Naive thymus-derived CD8-positive, alpha-beta T cell (primary cell): ENCODE measurements at regions of chr5 and their contacts with region 1.

Region 1: GRCh38 chr5:157858527-157859226 is at the start of gene CLINT1:
- DNase-seq: peak; percentile 80 to 92 (median 83)
- ATAC-seq: peak; percentile 95 to 96
- H3K4me3 Mint-ChIP-seq: peak within 1 kb of the TSS; percentile 90 to 99 (median 97)
- H3K27ac Mint-ChIP-seq: peak within 1 kb of the TSS; percentile 92 to 98 (median 96)
- H3K4me1 Mint-ChIP-seq: peaks cover 36 to 76% (median 72%) of the 10 kb centered on the region in 4 donors
- H3K27me3 Mint-ChIP-seq: no peaks in the 10 kb centered on the region
- polyA plus RNA-seq, gene CLINT1: 64.7 to 75.5 (median 65.0) TPM

Region 2: DNA sequence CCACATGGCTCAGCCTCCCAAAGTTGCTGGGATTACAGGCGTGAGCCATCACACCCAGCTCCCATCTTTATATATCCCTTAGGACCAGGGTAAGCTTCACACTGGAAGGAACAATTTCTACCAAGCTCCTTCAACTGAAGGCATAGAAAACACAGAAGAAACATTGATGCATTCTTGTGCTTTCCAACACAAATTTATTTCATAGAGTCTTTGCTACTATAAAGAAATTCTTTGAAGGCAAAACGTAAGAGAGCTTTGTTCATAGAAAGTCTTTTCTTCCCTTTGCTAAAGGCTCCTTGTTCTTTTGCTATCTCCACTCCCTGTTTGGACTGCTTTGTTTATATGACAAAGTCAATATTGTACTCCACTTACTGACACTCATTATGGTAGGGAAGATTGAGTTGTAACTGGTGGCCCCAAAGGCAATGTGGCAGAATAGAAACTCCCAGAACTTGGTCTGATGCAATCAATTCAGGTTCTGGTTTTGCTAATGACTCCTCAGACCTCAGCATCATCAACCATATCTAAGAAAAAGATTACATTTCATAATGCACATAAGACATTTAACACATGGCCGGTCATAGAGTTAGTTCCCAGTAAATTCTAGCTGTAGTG is 97.7 kb after region 1 on chr5:
- POLR2A ChIA-PET with region 1: interaction called, 10 read pairs
- DNase-seq: no peak
- ATAC-seq: no peak
- H3K4me3 Mint-ChIP-seq: no peak overlapping the region
- H3K27ac Mint-ChIP-seq: no peak overlapping the region
- H3K4me1 Mint-ChIP-seq: no peaks in the 10 kb centered on the region
- H3K27me3 Mint-ChIP-seq: peaks cover 3 to 19% (median 10%) of the 10 kb centered on the region in 5 donors

Region 3: GRCh38 chr5:158126442-158127405 is 268.0 kb after region 1 on chr5:
- POLR2A ChIA-PET with region 1: no interaction called
- DNase-seq: no peak
- ATAC-seq: no peak
- H3K4me3 Mint-ChIP-seq: no peak overlapping the region
- H3K27ac Mint-ChIP-seq: no peak overlapping the region
- H3K4me1 Mint-ChIP-seq: peaks cover 0 to 1% (median 0%) of the 10 kb centered on the region in 4 donors
- H3K27me3 Mint-ChIP-seq: peaks cover 0 to 9% (median 4%) of the 10 kb centered on the region in 5 donors